B cell (primary cell): ENCODE measurements at regions of chr2 and their contacts with region 1.

Region 1: GRCh38 chr2:134118279-134119116 is 135.4 kb upstream of the MGAT5 start:
- DNase-seq: peak; percentile 88
- ATAC-seq: peak; percentile 25
- H3K4me3 ChIP-seq: peak overlapping the region; percentile 2 to 94 (median 83)
- H3K4me3 Mint-ChIP-seq: peak overlapping the region; percentile 94
- H3K27ac ChIP-seq: peak overlapping the region in 1 of 2 donors; percentile 24
- H3K27ac Mint-ChIP-seq: peak overlapping the region; percentile 97
- H3K4me1 ChIP-seq: peaks cover 33 to 38% of the 10 kb centered on the region in 2 donors
- H3K4me1 Mint-ChIP-seq: peaks cover 36% of the 10 kb centered on the region
- H3K27me3 ChIP-seq: no peaks in the 10 kb centered on the region
- H3K27me3 Mint-ChIP-seq: no peaks in the 10 kb centered on the region
- CTCF ChIP-seq: peak; percentile 80

Region 2: GRCh38 chr2:133886735-133887660 is 231.5 kb before region 1 on chr2:
- CTCF ChIA-PET with region 1: interaction called, 156 read pairs
- POLR2A ChIA-PET with region 1: interaction called, 3 read pairs
- intact Hi-C with region 1: loop called (anchors 2 kb)
- DNase-seq: peak; percentile 79
- ATAC-seq: peak; percentile 75
- H3K4me3 ChIP-seq: no peak overlapping the region
- H3K4me3 Mint-ChIP-seq: no peak overlapping the region
- H3K27ac ChIP-seq: no peak overlapping the region
- H3K27ac Mint-ChIP-seq: no peak overlapping the region
- H3K4me1 ChIP-seq: peaks cover 7 to 10% of the 10 kb centered on the region in 2 donors
- H3K4me1 Mint-ChIP-seq: peaks cover 13% of the 10 kb centered on the region
- H3K27me3 ChIP-seq: peaks cover 0 to 3% (median 0%) of the 10 kb centered on the region in 4 experiments
- H3K27me3 Mint-ChIP-seq: no peaks in the 10 kb centered on the region
- CTCF ChIP-seq: peak; percentile 85

Region 3: GRCh38 chr2:134154246-134154645 is 35.7 kb after region 1 on chr2:
- CTCF ChIA-PET with region 1: interaction called, 6 read pairs
- POLR2A ChIA-PET with region 1: no interaction called
- intact Hi-C with region 1: loop called (anchors 2 kb)
- DNase-seq: peak; percentile 77
- ATAC-seq: peak; percentile 68
- H3K4me3 ChIP-seq: no peak overlapping the region
- H3K4me3 Mint-ChIP-seq: peak overlapping the region; percentile 57
- H3K27ac ChIP-seq: peak overlapping the region in 1 of 2 donors; percentile 84
- H3K27ac Mint-ChIP-seq: peak overlapping the region; percentile 85
- H3K4me1 ChIP-seq: peaks cover 43 to 60% of the 10 kb centered on the region in 2 donors
- H3K4me1 Mint-ChIP-seq: peaks cover 81% of the 10 kb centered on the region
- H3K27me3 ChIP-seq: no peaks in the 10 kb centered on the region
- H3K27me3 Mint-ChIP-seq: no peaks in the 10 kb centered on the region
- CTCF ChIP-seq: no peak

Region 4: DNA sequence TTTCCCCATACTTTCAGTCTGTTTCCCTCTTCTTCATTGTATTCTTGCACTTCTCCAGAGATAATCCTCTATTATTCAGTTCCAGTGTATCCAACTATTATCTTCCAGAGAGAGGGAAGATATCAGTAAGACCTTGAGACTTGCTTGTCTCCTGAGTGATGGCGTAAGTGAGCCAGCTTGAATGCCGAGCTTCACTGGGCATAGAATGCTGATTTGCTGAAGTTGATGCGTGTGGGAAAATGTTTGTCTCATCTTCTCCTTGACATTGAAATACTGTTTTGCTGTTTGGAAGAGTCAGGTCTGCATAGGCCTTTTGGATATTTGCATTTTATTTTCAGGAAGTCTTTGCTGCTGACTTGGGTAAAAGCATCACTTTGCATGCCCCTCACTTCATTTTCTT is 94.2 kb after region 1 on chr2:
- CTCF ChIA-PET with region 1: interaction called, 118 read pairs
- POLR2A ChIA-PET with region 1: interaction called, 7 read pairs
- intact Hi-C with region 1: loop called (anchors 5 kb)
- DNase-seq: no peak
- ATAC-seq: no peak
- H3K4me3 ChIP-seq: no peak overlapping the region
- H3K4me3 Mint-ChIP-seq: peak overlapping the region; percentile 20
- H3K27ac ChIP-seq: peak overlapping the region; percentile 17 to 56
- H3K27ac Mint-ChIP-seq: peak overlapping the region; percentile 64
- H3K4me1 ChIP-seq: peaks cover 43 to 45% of the 10 kb centered on the region in 2 donors
- H3K4me1 Mint-ChIP-seq: peaks cover 54% of the 10 kb centered on the region
- H3K27me3 ChIP-seq: no peaks in the 10 kb centered on the region
- H3K27me3 Mint-ChIP-seq: no peaks in the 10 kb centered on the region
- CTCF ChIP-seq: no peak

Region 5: GRCh38 chr2:134261398-134262131 is 143.1 kb after region 1 on chr2:
- CTCF ChIA-PET with region 1: interaction called, 22 read pairs
- POLR2A ChIA-PET with region 1: no interaction called
- intact Hi-C with region 1: no loop called
- DNase-seq: peak; percentile 78
- ATAC-seq: peak; percentile 55
- H3K4me3 ChIP-seq: peak overlapping the region in 1 of 5 experiments; percentile 22
- H3K4me3 Mint-ChIP-seq: peak overlapping the region; percentile 80
- H3K27ac ChIP-seq: peak overlapping the region; percentile 94 to 96
- H3K27ac Mint-ChIP-seq: peak overlapping the region; percentile 99
- H3K4me1 ChIP-seq: peaks cover 92 to 94% of the 10 kb centered on the region in 2 donors
- H3K4me1 Mint-ChIP-seq: peaks cover 86% of the 10 kb centered on the region
- H3K27me3 ChIP-seq: no peaks in the 10 kb centered on the region
- H3K27me3 Mint-ChIP-seq: no peaks in the 10 kb centered on the region
- CTCF ChIP-seq: no peak

Region 6: GRCh38 chr2:134411828-134412638 is 293.5 kb after region 1 on chr2:
- CTCF ChIA-PET with region 1: interaction called, 398 read pairs
- POLR2A ChIA-PET with region 1: interaction called, 23 read pairs
- intact Hi-C with region 1: loop called (anchors 1 kb)
- DNase-seq: peak; percentile 89
- ATAC-seq: peak; percentile 93
- H3K4me3 ChIP-seq: peak overlapping the region in 2 of 5 experiments; percentile 6 to 18
- H3K4me3 Mint-ChIP-seq: peak overlapping the region; percentile 59
- H3K27ac ChIP-seq: peak overlapping the region; percentile 64 to 74
- H3K27ac Mint-ChIP-seq: peak overlapping the region; percentile 86
- H3K4me1 ChIP-seq: peaks cover 45 to 50% of the 10 kb centered on the region in 2 donors
- H3K4me1 Mint-ChIP-seq: peaks cover 49% of the 10 kb centered on the region
- H3K27me3 ChIP-seq: no peaks in the 10 kb centered on the region
- H3K27me3 Mint-ChIP-seq: no peaks in the 10 kb centered on the region
- CTCF ChIP-seq: peak; percentile 81

Region 7: GRCh38 chr2:134897932-134898331 is 779.4 kb after region 1 on chr2:
- CTCF ChIA-PET with region 1: interaction called, 4 read pairs
- POLR2A ChIA-PET with region 1: no interaction called
- intact Hi-C with region 1: loop called (anchors 5 kb)
- DNase-seq: peak; percentile 24
- ATAC-seq: no peak
- H3K4me3 ChIP-seq: no peak overlapping the region
- H3K4me3 Mint-ChIP-seq: no peak overlapping the region
- H3K27ac ChIP-seq: no peak overlapping the region
- H3K27ac Mint-ChIP-seq: no peak overlapping the region
- H3K4me1 ChIP-seq: no peaks in the 10 kb centered on the region
- H3K4me1 Mint-ChIP-seq: no peaks in the 10 kb centered on the region
- H3K27me3 ChIP-seq: no peaks in the 10 kb centered on the region
- H3K27me3 Mint-ChIP-seq: no peaks in the 10 kb centered on the region
- CTCF ChIP-seq: peak; percentile 84